ENCODE measurements at regions of chr9 and their contacts with region 1.

Region 1: GRCh38 chr9:2043881-2044462 is 28.8 kb downstream of the SMARCA2 start:
- DNase-seq: no peak
- ATAC-seq: no peak
- H3K4me3 ChIP-seq: no peak overlapping the region
- H3K4me3 Mint-ChIP-seq: no peak overlapping the region
- H3K27ac ChIP-seq: peak overlapping the region in 1 of 2 experiments; percentile 10
- H3K27ac Mint-ChIP-seq: peak overlapping the region; percentile 80
- H3K4me1 ChIP-seq: peaks cover 11% of the 10 kb centered on the region
- H3K4me1 Mint-ChIP-seq: peaks cover 58% of the 10 kb centered on the region
- H3K27me3 ChIP-seq: no peaks in the 10 kb centered on the region
- H3K27me3 Mint-ChIP-seq: no peaks in the 10 kb centered on the region
- CTCF ChIP-seq: no peak

Region 2: GRCh38 chr9:1829719-1830118 is 214.3 kb before region 1 on chr9:
- CTCF ChIA-PET with region 1: no interaction called
- POLR2A ChIA-PET with region 1: no interaction called
- intact Hi-C with region 1: no loop called
- DNase-seq: no peak
- ATAC-seq: no peak
- H3K4me3 ChIP-seq: no peak overlapping the region
- H3K4me3 Mint-ChIP-seq: no peak overlapping the region
- H3K27ac ChIP-seq: no peak overlapping the region
- H3K27ac Mint-ChIP-seq: no peak overlapping the region
- H3K4me1 ChIP-seq: no peaks in the 10 kb centered on the region
- H3K4me1 Mint-ChIP-seq: no peaks in the 10 kb centered on the region
- H3K27me3 ChIP-seq: no peaks in the 10 kb centered on the region
- H3K27me3 Mint-ChIP-seq: peaks cover 17% of the 10 kb centered on the region
- CTCF ChIP-seq: no peak

Region 3: DNA sequence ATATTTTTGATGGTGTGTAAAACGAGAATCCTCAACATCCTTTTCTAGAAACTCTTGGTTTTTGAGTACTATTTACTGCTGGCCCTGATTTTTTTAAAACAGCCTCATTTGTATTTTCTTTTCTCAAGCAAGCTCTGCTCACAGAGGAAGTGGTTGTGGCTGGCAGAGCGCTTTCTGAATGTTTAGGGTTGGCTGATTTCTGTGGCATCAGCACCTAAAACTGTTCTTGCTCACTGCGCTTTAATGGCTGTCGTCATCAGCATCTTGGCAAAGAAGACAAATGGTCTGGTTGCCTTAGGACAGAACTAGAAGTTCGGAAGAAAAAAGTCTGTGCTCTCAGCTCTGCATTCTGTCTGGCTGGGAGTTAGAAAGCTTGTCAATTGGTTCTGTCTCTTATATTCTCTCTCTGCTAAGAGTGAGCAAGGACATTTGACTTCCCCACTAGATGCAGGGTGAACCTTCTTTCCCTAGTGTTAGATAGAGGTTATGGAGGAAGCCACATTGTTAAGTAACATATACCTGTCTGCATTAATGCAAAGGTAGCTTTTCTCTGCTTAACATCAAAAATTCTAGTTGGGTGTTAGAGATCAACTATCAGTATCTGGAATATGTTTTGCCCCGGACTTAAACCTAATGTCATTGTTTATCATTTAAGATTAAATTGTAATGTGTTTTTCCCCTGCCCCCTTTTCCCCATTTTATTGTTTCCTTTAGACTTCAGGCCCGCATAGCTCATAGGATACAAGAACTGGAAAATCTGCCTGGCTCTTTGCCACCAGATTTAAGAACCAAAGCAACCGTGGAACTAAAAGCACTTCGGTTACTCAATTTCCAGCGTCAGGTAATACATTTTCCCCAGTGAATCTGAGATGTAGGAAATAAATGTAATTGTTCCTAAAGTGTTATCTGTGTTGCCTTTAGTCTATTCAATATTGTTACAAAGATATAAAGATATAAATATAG is 10.2 kb after region 1 on chr9:
- CTCF ChIA-PET with region 1: interaction called, 4 read pairs
- POLR2A ChIA-PET with region 1: interaction called, 4 read pairs
- intact Hi-C with region 1: loop called in 1 of 2 experiments (anchors 1 kb)
- DNase-seq: peak; percentile 43 to 91 (median 68)
- ATAC-seq: peak; percentile 96
- H3K4me3 ChIP-seq: peak overlapping the region in 1 of 2 experiments; percentile 20
- H3K4me3 Mint-ChIP-seq: peak overlapping the region; percentile 68
- H3K27ac ChIP-seq: peak overlapping the region; percentile 31 to 82
- H3K27ac Mint-ChIP-seq: peak overlapping the region; percentile 94
- H3K4me1 ChIP-seq: peaks cover 33% of the 10 kb centered on the region
- H3K4me1 Mint-ChIP-seq: peaks cover 63% of the 10 kb centered on the region
- H3K27me3 ChIP-seq: no peaks in the 10 kb centered on the region
- H3K27me3 Mint-ChIP-seq: no peaks in the 10 kb centered on the region
- CTCF ChIP-seq: no peak

Region 4: DNA sequence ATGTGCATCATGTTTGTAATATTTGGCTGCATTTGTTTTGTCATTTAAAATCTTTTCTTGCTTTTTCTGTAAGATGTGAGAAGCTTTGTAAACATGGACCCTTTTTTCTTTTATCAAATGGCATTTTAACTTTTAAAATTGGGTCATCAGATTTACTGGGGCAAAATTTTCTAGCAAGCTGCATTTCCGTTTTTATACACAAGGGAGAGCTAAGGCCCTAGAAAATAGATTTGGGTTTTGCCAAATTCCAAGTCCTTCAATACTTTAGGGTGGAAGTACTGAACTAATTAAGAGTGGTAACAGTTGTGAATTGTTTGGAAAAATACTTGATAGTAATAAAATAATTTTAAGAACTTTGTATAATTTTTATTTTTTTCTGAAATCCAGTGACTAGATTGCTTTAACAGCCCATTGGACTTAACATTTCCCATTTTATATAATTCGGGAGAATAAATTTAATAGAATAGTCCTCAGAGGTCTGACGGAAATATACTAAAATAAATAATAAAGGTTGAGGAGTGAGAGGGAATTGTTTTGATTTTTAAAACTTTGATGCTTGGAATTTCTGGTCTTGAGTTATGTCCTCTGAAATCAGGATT is 88.6 kb after region 1 on chr9:
- CTCF ChIA-PET with region 1: no interaction called
- POLR2A ChIA-PET with region 1: no interaction called
- intact Hi-C with region 1: no loop called
- DNase-seq: peak in 2 of 9 experiments; percentile 11 to 25
- ATAC-seq: no peak
- H3K4me3 ChIP-seq: no peak overlapping the region
- H3K4me3 Mint-ChIP-seq: no peak overlapping the region
- H3K27ac ChIP-seq: no peak overlapping the region
- H3K27ac Mint-ChIP-seq: no peak overlapping the region
- H3K4me1 ChIP-seq: no peaks in the 10 kb centered on the region
- H3K4me1 Mint-ChIP-seq: peaks cover 49% of the 10 kb centered on the region
- H3K27me3 ChIP-seq: no peaks in the 10 kb centered on the region
- H3K27me3 Mint-ChIP-seq: no peaks in the 10 kb centered on the region
- CTCF ChIP-seq: peak; percentile 75

Region 5: DNA sequence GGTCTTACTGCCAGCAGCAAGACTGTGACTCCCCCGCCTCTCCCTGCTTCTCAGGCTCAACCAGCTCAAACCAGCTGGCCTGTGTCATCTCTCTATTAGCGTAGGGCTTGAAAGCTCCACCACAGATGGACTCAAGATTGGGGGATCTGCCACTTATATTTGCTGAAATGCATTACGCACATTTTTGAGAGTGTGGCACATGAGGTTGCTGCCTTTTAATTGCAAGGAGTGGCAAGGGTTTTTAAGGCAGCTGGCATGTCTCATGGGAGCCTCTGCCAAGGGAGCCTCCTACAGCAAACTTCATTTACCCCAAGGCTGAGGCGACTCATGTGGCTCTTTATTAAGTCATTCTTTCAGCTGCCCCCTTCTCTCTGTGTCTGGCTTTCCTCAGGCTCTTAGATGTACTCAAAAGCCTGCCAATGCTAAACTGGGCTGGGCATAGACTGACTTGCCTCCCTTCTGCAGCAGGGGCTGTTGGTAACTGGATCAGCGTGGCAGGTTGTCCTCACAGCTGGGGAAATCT is 190.5 kb after region 1 on chr9:
- CTCF ChIA-PET with region 1: no interaction called
- POLR2A ChIA-PET with region 1: no interaction called
- intact Hi-C with region 1: no loop called
- DNase-seq: no peak
- ATAC-seq: no peak
- H3K4me3 ChIP-seq: no peak overlapping the region
- H3K4me3 Mint-ChIP-seq: no peak overlapping the region
- H3K27ac ChIP-seq: no peak overlapping the region
- H3K27ac Mint-ChIP-seq: no peak overlapping the region
- H3K4me1 ChIP-seq: no peaks in the 10 kb centered on the region
- H3K4me1 Mint-ChIP-seq: no peaks in the 10 kb centered on the region
- H3K27me3 ChIP-seq: no peaks in the 10 kb centered on the region
- H3K27me3 Mint-ChIP-seq: no peaks in the 10 kb centered on the region
- CTCF ChIP-seq: no peak